Activated CD4-positive, alpha-beta T cell treated with anti-CD3 and anti-CD28 coated beads for 36 hours (primary cell): ENCODE measurements at regions of chr17 and their contacts with region 1.

Region 1: GRCh38 chr17:70829876-70830275 is 660.5 kb downstream of the KCNJ2 start:
- DNase-seq: no peak
- ATAC-seq: no peak
- H3K4me3 Mint-ChIP-seq: no peak overlapping the region
- H3K27ac Mint-ChIP-seq: no peak overlapping the region
- H3K4me1 Mint-ChIP-seq: no peaks in the 10 kb centered on the region
- H3K27me3 Mint-ChIP-seq: no peaks in the 10 kb centered on the region

Region 2: GRCh38 chr17:70752972-70753467 is 76.9 kb before region 1 on chr17:
- CTCF ChIA-PET with region 1: no interaction called
- POLR2A ChIA-PET with region 1: no interaction called
- intact Hi-C with region 1: no loop called
- DNase-seq: no peak
- ATAC-seq: no peak
- H3K4me3 Mint-ChIP-seq: no peak overlapping the region
- H3K27ac Mint-ChIP-seq: no peak overlapping the region
- H3K4me1 Mint-ChIP-seq: no peaks in the 10 kb centered on the region
- H3K27me3 Mint-ChIP-seq: no peaks in the 10 kb centered on the region

Region 3: DNA sequence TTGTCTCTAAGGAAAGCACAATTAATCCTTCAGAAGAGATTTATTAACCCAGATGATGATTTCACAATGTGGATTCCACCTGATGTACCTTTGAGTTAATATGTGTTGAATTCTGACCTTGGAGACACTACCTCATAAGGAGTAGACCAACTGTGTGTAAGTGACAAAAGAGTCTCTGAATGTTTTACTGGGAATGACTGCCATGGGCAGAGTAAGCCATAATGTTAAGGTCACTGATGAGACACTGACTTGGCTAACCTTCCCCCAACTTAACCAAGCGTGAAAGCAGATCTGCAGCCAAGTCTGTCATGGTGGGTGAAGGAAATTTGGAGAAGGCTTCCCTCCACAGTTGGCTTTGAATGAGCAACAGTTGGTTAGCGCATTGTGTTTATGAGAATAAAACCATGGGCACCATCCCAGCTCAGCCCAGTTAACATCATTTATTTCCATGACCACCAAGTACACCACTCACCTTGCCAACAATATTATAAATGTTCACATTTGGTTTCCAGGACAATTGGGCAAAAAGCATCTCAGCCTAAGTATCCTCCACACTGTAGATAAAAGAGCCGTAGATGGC is 42.1 kb before region 1 on chr17:
- CTCF ChIA-PET with region 1: no interaction called
- POLR2A ChIA-PET with region 1: no interaction called
- intact Hi-C with region 1: loop called in 1 of 2 experiments (anchors 5 kb)
- DNase-seq: no peak
- ATAC-seq: no peak
- H3K4me3 Mint-ChIP-seq: no peak overlapping the region
- H3K27ac Mint-ChIP-seq: no peak overlapping the region
- H3K4me1 Mint-ChIP-seq: no peaks in the 10 kb centered on the region
- H3K27me3 Mint-ChIP-seq: no peaks in the 10 kb centered on the region

Region 4: DNA sequence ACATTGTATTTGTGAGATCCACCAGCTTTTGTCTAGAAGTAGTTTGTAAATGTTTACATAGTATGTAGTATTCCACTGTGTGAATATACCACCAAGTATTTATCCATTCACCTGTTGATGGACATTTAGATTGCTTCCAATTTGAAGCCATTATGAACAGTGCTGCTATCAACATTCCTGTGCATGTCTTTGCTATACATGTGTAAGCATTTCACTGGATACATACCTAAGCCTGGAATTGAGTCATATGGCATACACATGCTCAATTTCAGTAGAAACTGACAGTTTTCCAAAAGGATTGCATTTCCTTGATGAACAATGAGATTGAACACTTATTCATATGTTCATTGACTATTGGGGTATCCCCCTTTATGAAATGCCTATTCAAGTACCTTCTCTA is 750.3 kb after region 1 on chr17:
- CTCF ChIA-PET with region 1: no interaction called
- POLR2A ChIA-PET with region 1: no interaction called
- intact Hi-C with region 1: no loop called
- DNase-seq: no peak
- ATAC-seq: no peak
- H3K4me3 Mint-ChIP-seq: no peak overlapping the region
- H3K27ac Mint-ChIP-seq: no peak overlapping the region
- H3K4me1 Mint-ChIP-seq: no peaks in the 10 kb centered on the region
- H3K27me3 Mint-ChIP-seq: no peaks in the 10 kb centered on the region